AG04449 (cell line): ENCODE measurements at regions of chr3 and their contacts with region 1.

Region 1: GRCh38 chr3:169149349-169149890 is 514.1 kb downstream of the MECOM start:
- DNase-seq: no peak
- H3K4me3 ChIP-seq: peak overlapping the region; percentile 55
- CTCF ChIP-seq: peak; percentile 86

Region 2: GRCh38 chr3:169041677-169042171 is 107.7 kb before region 1 on chr3:
- CTCF ChIA-PET with region 1: interaction called, 14 read pairs
- POLR2A ChIA-PET with region 1: no interaction called
- DNase-seq: no peak
- H3K4me3 ChIP-seq: no peak overlapping the region
- CTCF ChIP-seq: no peak

Region 3: DNA sequence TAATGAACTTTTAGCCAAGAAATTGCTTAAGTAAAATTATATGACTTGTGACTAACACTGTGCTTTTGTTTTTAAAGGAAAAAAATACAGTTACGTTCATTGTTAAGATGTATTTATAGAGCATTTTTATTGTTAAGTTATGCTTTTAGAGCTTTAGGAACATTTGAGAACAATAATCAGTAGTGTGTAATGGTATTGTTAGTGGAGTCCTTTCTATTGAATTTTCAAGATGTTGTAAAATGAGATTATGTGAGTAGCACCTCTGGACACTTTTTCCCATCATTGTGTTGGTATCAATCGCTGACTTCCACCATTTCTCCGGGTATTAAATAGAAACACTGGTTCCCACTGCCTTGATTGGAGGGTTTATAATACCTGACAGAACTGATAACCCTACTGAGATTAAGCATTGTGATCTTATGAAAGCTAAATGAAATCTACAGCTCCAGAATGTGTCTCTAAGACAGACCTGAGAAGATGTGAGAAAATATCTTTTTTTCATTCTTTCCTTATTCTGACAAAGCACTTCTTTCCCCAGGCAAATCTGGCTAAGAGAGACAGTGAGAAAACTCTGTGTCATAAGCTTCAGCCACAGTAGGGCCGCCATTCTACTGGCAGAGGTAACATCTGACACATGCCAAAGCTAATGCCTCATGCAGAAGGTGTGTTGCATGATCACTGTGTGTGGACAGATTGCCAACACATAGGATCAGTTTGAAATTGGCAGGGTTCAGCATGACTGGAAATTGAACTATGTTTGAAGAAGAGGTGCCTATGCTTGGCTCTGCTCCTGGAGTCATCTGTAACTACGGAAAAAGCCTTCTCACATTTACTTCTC is 96.7 kb before region 1 on chr3:
- CTCF ChIA-PET with region 1: interaction called, 11 read pairs
- POLR2A ChIA-PET with region 1: no interaction called
- DNase-seq: no peak
- H3K4me3 ChIP-seq: no peak overlapping the region
- CTCF ChIP-seq: no peak

Region 4: GRCh38 chr3:169133178-169134161 is 15.9 kb before region 1 on chr3:
- CTCF ChIA-PET with region 1: interaction called, 25 read pairs
- POLR2A ChIA-PET with region 1: no interaction called
- DNase-seq: no peak
- H3K4me3 ChIP-seq: no peak overlapping the region
- CTCF ChIP-seq: no peak

Region 5: DNA sequence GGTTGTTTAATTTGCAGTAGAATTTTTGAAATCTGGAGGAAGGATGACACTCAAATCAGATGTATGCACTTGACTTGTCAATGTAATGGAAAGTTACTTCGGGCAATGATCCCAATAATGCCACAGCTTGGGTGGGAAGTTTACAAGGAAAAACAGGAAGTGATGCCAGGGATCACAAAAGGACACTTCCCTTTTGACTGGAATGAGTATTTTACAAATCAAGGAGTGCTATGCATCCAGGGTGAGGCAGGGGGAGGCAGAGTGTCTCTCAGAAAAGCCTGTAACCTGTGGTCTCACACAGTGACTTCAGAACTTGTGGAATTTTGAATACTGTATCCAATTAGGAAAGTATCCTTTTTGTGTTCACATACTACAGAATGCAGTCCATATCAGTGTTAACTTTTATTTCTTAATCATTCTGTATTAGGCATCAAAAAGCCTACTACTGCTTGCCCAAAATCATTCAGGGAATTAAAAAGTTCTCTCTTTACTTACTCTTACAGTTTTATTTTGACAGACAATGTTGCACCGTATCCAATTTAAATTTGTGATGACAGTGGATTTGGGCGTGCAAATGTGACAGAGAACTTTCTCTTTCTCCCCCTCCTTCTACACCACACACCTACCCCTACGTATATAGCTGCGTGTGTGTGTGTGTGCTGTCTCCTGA is 69.0 kb after region 1 on chr3:
- CTCF ChIA-PET with region 1: interaction called, 15 read pairs
- POLR2A ChIA-PET with region 1: no interaction called
- DNase-seq: no peak
- H3K4me3 ChIP-seq: no peak overlapping the region
- CTCF ChIP-seq: peak; percentile 82

Region 6: GRCh38 chr3:169295126-169295525 is 145.7 kb after region 1 on chr3:
- CTCF ChIA-PET with region 1: interaction called, 19 read pairs
- POLR2A ChIA-PET with region 1: no interaction called
- DNase-seq: no peak
- H3K4me3 ChIP-seq: no peak overlapping the region
- CTCF ChIP-seq: no peak

Region 7: GRCh38 chr3:169668957-169669681 is 519.7 kb after region 1 on chr3:
- CTCF ChIA-PET with region 1: interaction called, 43 read pairs
- POLR2A ChIA-PET with region 1: no interaction called
- DNase-seq: no peak
- H3K4me3 ChIP-seq: peak overlapping the region; percentile 27
- CTCF ChIP-seq: peak; percentile 82